PC-3 (cell line): ENCODE measurements at regions of chr18 and their contacts with region 1.

Region 1: GRCh38 chr18:2906704-2907549 is 60.1 kb downstream of the EMILIN2 start:
- DNase-seq: peak; percentile 31
- ATAC-seq: peak; percentile 65
- H3K4me3 ChIP-seq: peak overlapping the region; percentile 84
- H3K27ac ChIP-seq: no peak overlapping the region; the same call in 1 of the 2 replicates
- H3K4me1 ChIP-seq: peaks cover 6% of the 10 kb centered on the region; the same call in 1 of the 2 replicates
- H3K27me3 ChIP-seq: 0 out of 2 replicates have a peak, but pooled peaks cover 3% of the 10 kb centered on the region
- CTCF ChIP-seq: no peak; the same call in 1 of the 2 replicates

Region 2: GRCh38 chr18:2805970-2806943 is 100.7 kb before region 1 on chr18:
- CTCF ChIA-PET with region 1: no interaction called
- POLR2A ChIA-PET with region 1: no interaction called
- intact Hi-C with region 1: loop called (anchors 10 kb)
- DNase-seq: peak; percentile 23
- ATAC-seq: peak; percentile 91
- H3K4me3 ChIP-seq: no peak overlapping the region
- H3K27ac ChIP-seq: no peak overlapping the region
- H3K4me1 ChIP-seq: peaks cover 8% of the 10 kb centered on the region; the same call in 1 of the 2 replicates
- H3K27me3 ChIP-seq: no peaks in the 10 kb centered on the region
- CTCF ChIP-seq: no peak

Region 3: GRCh38 chr18:3062798-3063680 is 156.1 kb after region 1 on chr18:
- CTCF ChIA-PET with region 1: no interaction called
- POLR2A ChIA-PET with region 1: no interaction called
- intact Hi-C with region 1: no loop called
- DNase-seq: peak; percentile 57
- ATAC-seq: peak; percentile 75
- H3K4me3 ChIP-seq: no peak overlapping the region
- H3K27ac ChIP-seq: no peak overlapping the region
- H3K4me1 ChIP-seq: peaks cover 9% of the 10 kb centered on the region
- H3K27me3 ChIP-seq: no peaks in the 10 kb centered on the region
- CTCF ChIP-seq: peak; percentile 92